Activated CD4-positive, alpha-beta memory T cell treated with anti-CD3 and anti-CD28 coated beads for 36 hours (primary cell): ENCODE measurements at regions of chr19 and their contacts with region 1.

Region 1: DNA sequence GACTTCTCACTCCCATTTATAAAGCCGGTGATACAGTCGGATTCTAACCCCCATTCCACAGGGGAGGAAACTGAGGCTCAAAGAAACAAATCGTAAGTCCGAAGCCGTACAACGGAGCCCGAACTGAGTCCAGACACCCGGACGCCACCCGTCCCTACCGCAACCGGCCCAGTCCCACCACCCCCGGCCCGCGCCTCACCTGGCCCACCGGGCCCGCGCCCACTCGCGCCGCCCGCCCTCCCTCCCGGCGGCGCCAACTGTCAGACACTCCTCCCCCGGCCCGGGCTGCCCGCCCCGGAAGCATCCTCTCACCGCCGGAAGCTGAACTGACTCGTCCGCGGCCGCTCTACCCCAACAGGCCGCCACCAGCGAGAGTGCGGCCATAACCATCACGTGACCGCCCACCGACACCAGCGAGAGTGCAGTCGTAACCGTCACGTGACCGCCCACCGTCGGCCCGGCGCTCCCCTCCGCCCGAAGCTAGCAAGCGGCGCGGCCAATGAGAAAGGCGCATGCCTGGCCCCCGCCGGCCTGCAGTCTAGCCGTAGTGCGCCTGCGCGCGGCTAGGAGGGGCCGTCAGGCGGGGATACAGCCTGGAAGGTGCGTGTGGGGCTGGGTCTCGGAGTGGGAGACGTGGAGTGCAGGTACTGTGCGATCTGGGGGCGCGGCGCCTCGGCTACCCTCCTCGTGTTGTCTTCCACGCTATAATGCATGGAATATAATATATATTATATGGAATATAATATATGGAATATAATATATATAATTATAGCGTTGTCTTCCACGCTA is at the starts of genes C19orf47 and PLD3:
- DNase-seq: peak; percentile 99
- H3K4me3 Mint-ChIP-seq: peak within 1 kb of the TSS; percentile 83
- H3K27ac Mint-ChIP-seq: peak within 1 kb of the TSS; percentile 61
- H3K4me1 Mint-ChIP-seq: peaks cover 26% of the 10 kb centered on the region
- H3K27me3 Mint-ChIP-seq: no peaks in the 10 kb centered on the region
- total RNA-seq, gene C19orf47: 18.3 to 20.8 TPM
- total RNA-seq, gene PLD3: 70.9 to 73.4 TPM

Region 2: GRCh38 chr19:40285353-40286234 is 62.7 kb before region 1 on chr19:
- CTCF ChIA-PET with region 1: no interaction called
- POLR2A ChIA-PET with region 1: no interaction called
- intact Hi-C with region 1: loop called (anchors 1 kb)
- DNase-seq: peak; percentile 99
- H3K4me3 Mint-ChIP-seq: peak overlapping the region; percentile 87
- H3K27ac Mint-ChIP-seq: peak overlapping the region; percentile 99
- H3K4me1 Mint-ChIP-seq: peaks cover 43% of the 10 kb centered on the region
- H3K27me3 Mint-ChIP-seq: no peaks in the 10 kb centered on the region

Region 3: DNA sequence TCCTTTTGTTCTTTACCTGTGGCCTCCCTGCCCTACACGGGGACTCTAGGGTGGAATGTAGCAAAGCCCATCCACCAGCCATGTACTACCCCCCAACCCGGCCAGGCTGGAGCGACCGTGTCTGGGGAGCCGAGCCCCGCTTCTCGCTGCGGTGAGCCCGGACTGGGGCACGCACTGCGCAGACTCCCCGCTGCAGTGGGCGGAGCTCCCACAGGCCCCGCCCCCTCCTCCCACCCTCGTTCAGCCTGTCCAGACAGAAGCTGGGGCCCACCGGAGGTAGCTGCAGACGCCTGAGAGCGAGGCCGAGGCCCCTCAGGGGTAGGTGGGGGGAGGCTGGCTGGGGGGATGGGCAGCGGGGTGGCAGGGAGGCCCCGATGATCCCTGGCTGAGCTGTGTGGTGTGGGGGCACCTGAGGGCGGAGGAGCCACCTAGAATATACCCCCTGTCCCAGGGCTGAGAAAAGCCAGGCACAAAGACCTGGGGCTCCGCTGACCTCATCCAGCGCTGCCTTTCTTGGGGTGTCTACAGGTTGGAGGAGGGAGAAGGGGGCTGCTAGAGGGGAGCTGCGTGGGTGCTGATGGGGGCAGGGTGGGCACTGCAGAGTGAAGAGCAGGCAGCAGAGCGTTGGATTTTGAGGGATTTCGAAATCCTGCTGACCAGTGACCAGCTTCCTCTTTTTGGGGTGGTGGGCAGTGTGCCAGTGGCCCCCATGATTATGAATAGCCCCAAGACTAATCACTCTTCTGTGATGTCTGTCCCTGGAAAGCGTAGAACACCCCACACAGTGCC is 17.5 kb after region 1 on chr19:
- CTCF ChIA-PET with region 1: no interaction called
- POLR2A ChIA-PET with region 1: no interaction called
- intact Hi-C with region 1: no loop called
- DNase-seq: peak; percentile 68
- H3K4me3 Mint-ChIP-seq: peak overlapping the region; percentile 32
- H3K27ac Mint-ChIP-seq: no peak overlapping the region
- H3K4me1 Mint-ChIP-seq: peaks cover 11% of the 10 kb centered on the region
- H3K27me3 Mint-ChIP-seq: no peaks in the 10 kb centered on the region

Region 4: DNA sequence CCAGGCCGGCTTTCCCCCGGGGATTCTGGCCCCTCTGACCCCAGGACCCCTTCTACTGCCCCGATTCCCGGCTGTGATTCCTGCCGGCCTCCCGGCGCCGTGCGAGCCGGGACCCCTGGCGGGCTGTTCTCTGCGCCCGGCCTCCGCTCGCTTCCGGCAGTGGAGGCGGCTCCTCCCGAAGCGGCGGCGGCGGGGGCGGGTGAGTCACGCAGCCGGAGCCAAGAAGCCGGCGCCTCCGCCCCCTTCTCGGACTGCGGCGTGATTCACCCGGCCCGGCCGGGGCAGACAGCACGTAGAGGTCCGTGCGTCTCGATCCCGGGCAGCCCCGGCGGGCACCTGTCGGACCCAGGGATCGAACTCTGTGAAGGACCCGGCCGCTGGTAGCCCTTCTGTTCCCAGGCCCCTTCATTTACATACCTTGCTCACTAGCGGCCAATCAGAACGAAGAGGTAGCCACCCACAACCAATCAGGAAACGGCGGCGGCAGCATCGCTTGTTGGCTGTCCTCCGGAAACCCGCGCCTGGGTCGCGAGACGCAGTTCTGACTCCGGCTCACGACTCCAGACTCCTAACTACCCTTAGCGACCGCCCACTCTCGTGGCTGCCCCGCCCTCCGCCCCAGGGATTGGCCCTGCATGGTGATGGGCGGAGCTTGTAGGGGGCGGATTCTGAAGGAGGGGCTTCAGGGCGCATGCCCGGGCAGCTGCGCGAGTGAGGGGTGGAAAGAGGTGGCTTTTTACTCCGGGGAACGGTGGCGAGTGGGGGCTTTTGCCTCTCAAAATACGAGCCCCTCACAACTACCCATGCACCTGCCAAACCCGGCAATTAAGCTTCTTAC is 77.3 kb after region 1 on chr19 and contains the start of gene SERTAD1:
- CTCF ChIA-PET with region 1: interaction called, 4 read pairs
- POLR2A ChIA-PET with region 1: interaction called, 3 read pairs
- intact Hi-C with region 1: loop called (anchors 5 kb)
- DNase-seq: peak; percentile 100
- H3K4me3 Mint-ChIP-seq: peak within 1 kb of the TSS; percentile 81
- H3K27ac Mint-ChIP-seq: peak within 1 kb of the TSS; percentile 88
- H3K4me1 Mint-ChIP-seq: peaks cover 17% of the 10 kb centered on the region
- H3K27me3 Mint-ChIP-seq: no peaks in the 10 kb centered on the region
- total RNA-seq, gene SERTAD1: 11.5 to 12.6 TPM

Region 5: DNA sequence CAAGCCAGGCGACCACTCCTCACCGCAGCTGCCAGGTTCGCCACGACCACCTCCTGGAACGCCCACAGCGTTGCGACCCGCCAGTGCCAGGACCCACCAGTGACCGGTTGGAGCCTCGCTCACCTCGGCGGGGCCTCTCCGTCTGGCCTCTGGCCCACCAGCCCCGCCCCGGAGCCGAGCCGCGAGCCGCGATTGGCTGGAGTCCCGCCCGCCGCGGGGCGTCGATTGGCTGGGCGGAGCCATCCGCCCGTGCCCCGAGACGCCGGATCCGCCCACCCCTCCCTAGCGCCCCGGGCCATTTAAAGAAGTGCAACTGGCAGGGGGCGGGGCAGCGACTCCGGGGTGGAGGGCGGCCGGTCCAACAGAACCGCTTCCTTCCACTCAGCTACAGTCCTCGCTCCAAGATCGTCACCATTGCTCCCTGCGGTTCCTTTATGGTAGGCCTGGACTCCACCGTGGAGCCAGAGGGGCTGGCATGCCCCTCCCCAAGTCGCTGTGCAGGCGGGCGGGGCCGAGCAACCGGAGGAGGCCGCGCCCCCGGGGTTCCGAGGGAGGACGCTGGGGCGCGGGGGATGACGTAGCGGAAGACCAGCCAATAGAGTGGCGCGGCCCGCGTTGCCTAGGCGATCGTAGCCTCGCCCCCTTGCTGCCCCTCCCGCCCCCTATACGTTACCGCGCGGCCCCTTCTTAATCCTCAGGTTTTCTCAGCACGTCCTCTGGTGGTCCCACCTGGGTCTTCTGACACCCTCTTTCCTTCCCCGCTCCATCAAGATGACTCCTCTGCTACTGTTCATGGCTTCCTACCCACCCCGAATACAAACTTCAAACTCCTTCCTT is 96.1 kb after region 1 on chr19 and contains the start of gene SERTAD3:
- CTCF ChIA-PET with region 1: no interaction called
- POLR2A ChIA-PET with region 1: no interaction called
- intact Hi-C with region 1: loop called (anchors 1 kb)
- DNase-seq: peak; percentile 97
- H3K4me3 Mint-ChIP-seq: peak within 1 kb of the TSS; percentile 97
- H3K27ac Mint-ChIP-seq: peak within 1 kb of the TSS; percentile 92
- H3K4me1 Mint-ChIP-seq: peaks cover 14% of the 10 kb centered on the region
- H3K27me3 Mint-ChIP-seq: no peaks in the 10 kb centered on the region
- total RNA-seq, gene SERTAD3: 12.1 to 13.1 TPM

Region 6: GRCh38 chr19:40497214-40497613 is 148.9 kb after region 1 on chr19:
- CTCF ChIA-PET with region 1: no interaction called
- POLR2A ChIA-PET with region 1: no interaction called
- intact Hi-C with region 1: no loop called
- DNase-seq: no peak
- H3K4me3 Mint-ChIP-seq: no peak overlapping the region
- H3K27ac Mint-ChIP-seq: no peak overlapping the region
- H3K4me1 Mint-ChIP-seq: no peaks in the 10 kb centered on the region
- H3K27me3 Mint-ChIP-seq: peaks cover 9% of the 10 kb centered on the region

Region 7: DNA sequence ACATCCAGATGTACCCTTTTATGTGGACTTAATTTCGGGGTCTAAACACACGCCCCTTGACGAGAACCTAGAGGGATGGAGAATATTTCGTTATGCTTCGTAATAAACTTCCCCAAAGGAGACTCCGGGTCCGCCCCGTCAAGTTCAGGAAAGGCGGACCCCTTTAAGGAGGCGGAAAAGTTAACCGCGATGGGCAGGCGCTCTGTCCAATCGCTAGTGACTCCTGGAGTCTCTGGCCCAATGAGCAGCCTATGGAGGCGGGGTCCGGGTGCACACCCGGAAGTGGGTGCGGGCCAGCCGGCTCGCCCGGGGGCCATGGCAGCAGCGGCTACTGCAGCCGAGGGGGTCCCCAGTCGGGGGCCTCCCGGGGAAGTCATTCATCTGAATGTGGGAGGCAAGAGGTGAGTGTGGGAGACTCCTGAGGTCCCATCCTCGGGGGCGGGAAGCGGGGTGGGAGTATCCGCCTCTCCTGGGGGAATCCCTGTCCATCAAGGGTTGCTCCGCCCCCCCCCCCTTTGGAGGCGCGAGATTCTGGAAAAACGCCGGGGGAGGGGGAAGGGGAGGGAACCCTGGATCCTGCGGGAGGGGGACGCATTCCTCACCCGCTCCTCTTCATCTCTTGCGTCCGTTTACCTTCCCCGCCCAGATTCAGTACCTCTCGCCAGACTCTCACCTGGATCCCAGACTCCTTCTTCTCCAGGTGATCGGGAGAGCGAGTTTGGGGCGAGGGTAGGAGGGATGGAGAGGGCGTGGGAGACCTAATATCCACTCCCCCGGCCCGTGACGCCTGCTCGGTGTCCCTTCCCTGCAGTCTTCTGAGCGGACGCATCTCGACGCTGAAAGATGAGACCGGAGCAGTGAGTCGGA is 228.5 kb after region 1 on chr19 and contains the start of gene SHKBP1:
- CTCF ChIA-PET with region 1: no interaction called
- POLR2A ChIA-PET with region 1: no interaction called
- intact Hi-C with region 1: loop called (anchors 1 kb)
- DNase-seq: peak; percentile 96
- H3K4me3 Mint-ChIP-seq: peak within 1 kb of the TSS; percentile 85
- H3K27ac Mint-ChIP-seq: peak within 1 kb of the TSS; percentile 69
- H3K4me1 Mint-ChIP-seq: peaks cover 16% of the 10 kb centered on the region
- H3K27me3 Mint-ChIP-seq: no peaks in the 10 kb centered on the region
- total RNA-seq, gene SHKBP1: 112 to 126 TPM

Region 8: GRCh38 chr19:41363753-41364523 is 1015.6 kb after region 1 on chr19 and contains the start of gene B9D2:
- CTCF ChIA-PET with region 1: no interaction called
- POLR2A ChIA-PET with region 1: no interaction called
- intact Hi-C with region 1: loop called (anchors 5 kb)
- DNase-seq: peak; percentile 99
- H3K4me3 Mint-ChIP-seq: peak within 1 kb of the TSS; percentile 91
- H3K27ac Mint-ChIP-seq: peak within 1 kb of the TSS; percentile 92
- H3K4me1 Mint-ChIP-seq: peaks cover 15% of the 10 kb centered on the region
- H3K27me3 Mint-ChIP-seq: no peaks in the 10 kb centered on the region
- total RNA-seq, gene B9D2: 4.7 to 5.1 TPM